AG04450 (cell line): ENCODE measurements at regions of chr17 and their contacts with region 1.

Region 1: DNA sequence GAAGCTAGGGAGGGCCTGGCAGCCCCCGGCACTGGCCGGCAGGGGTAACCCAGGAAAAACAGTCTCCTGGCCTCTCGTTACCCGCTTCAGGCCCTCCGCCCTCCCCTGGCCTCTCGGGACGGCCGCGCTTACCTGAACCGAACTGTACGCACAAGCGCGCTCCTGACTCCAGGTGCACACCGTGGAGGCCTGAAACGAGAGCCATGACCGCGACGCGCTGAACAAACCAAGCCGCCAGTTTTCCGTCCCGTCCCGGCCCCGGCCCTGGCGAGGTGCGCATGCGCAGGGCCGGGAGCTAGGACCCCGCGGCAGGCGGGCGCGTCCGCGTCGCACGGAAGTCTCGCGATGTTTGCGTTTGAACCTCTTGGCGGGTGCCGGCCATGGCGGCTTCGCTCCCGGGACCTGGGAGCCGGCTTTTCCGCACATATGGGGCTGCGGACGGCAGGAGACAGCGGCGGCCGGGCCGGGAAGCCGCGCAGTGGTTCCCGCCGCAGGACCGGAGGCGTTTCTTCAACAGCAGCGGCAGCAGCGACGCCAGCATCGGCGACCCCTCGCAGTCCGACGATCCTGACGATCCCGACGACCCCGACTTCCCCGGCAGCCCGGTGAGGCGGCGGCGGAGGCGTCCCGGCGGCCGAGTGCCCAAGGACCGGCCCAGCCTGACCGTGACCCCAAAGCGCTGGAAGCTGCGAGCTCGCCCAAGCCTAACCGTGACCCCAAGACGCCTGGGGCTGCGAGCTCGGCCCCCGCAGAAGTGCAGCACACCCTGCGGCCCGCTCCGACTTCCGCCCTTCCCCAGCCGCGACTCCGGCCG is at the start of gene HASPIN:
- DNase-seq: peak; percentile 62
- H3K4me3 ChIP-seq: peak within 1 kb of the TSS; percentile 94
- H3K27ac ChIP-seq: peak within 1 kb of the TSS; percentile 57
- H3K27me3 ChIP-seq: no peaks in the 10 kb centered on the region
- CTCF ChIP-seq: peak; percentile 34
- polyA plus RNA-seq, gene HASPIN: 1.3 and 1.6 TPM in 2 replicates

Region 2: DNA sequence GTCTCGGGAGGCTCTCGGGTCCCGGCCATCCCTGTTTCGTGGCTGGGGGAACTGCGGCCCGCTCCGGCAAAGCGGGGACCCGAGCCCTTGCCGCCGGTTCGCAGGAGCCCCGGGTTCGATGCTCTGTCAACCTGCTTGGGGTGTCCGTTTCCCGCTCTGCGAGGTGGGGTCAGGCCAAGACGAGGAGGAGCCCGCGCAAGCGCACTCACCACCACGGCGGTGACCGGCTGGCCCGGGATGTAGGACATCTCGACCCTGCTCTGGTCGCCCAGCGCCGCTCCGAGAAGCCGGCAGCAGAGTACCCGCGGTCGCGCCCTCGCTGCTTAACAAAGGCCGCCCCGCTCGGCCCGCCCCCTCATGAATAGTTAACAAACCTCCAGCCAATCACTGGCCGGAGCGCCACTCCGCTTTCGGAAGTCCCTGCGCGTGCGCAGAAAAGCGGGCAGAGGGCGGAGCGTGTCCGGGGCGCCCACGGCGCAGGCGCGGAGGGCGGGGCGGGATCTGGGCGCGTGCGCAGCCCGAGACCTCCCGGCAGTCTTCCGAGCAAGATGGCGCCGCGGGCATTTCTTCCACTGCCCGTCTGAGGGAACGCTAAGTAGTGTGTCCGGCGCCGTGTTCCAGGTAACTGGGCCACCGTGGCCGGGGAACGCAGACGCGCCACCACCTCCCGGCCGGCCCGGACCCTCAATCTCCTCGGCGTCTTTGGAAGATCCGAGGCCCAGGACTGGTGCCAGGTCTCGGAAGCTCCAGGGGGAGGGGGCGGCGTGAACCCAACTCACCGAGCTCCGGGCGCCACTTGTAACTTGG is 55.3 kb before region 1 on chr17 and contains the starts of genes EMC6 and TAX1BP3:
- CTCF ChIA-PET with region 1: no interaction called
- POLR2A ChIA-PET with region 1: interaction called, 14 read pairs
- DNase-seq: peak; percentile 90
- H3K4me3 ChIP-seq: peak within 1 kb of the TSS; percentile 97
- H3K27ac ChIP-seq: peak within 1 kb of the TSS; percentile 99
- H3K27me3 ChIP-seq: no peaks in the 10 kb centered on the region
- CTCF ChIP-seq: no peak
- polyA plus RNA-seq, gene EMC6: 23.4 and 28.9 TPM in 2 replicates
- polyA plus RNA-seq, gene TAX1BP3: 163 and 178 TPM in 2 replicates

Region 3: DNA sequence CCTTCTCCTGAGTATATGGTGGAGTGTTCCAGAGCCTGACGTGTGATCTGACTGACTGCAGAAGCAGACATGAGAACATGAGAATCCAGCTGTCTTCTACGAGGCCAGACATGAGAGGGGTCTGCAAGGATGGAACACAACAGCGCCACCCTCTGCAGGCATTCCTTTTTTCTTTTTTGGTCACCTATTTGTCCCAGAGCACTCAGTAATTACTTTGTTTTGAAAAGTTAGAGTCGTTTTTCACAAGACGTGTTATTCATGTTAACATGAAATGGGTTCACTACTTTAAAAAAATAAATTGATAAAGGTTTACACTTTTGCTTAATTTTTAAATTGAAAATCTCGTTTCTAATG is 284.3 kb after region 1 on chr17:
- CTCF ChIA-PET with region 1: interaction called, 15 read pairs
- POLR2A ChIA-PET with region 1: no interaction called
- DNase-seq: no peak
- H3K4me3 ChIP-seq: no peak overlapping the region
- H3K27ac ChIP-seq: peak overlapping the region; percentile 65
- H3K27me3 ChIP-seq: no peaks in the 10 kb centered on the region
- CTCF ChIP-seq: peak; percentile 27; the same call in 1 of the 2 replicates